ENCODE measurements at regions of chr15 and their contacts with region 1.

Region 1: GRCh38 chr15:80031841-80032240 is 27.6 kb upstream of the ZFAND6 start:
- DNase-seq: no peak
- H3K4me3 ChIP-seq: no peak overlapping the region
- H3K27ac ChIP-seq: no peak overlapping the region
- H3K4me1 ChIP-seq: peaks cover 18% of the 10 kb centered on the region
- H3K27me3 ChIP-seq: no peaks in the 10 kb centered on the region
- CTCF ChIP-seq: no peak
- POLR2A ChIP-seq: no peak

Region 2: GRCh38 chr15:79923515-79924395 is 108.1 kb before region 1 on chr15:
- CTCF ChIA-PET with region 1: no interaction called
- POLR2A ChIA-PET with region 1: interaction called, 3 read pairs
- dilution Hi-C with region 1: no loop called
- intact Hi-C with region 1: loop called (anchors 1 kb)
- DNase-seq: peak; percentile 93
- H3K4me3 ChIP-seq: peak overlapping the region; percentile 87 to 96 (median 92)
- H3K27ac ChIP-seq: peak overlapping the region; percentile 52
- H3K4me1 ChIP-seq: peaks cover 10% of the 10 kb centered on the region
- H3K27me3 ChIP-seq: no peaks in the 10 kb centered on the region
- CTCF ChIP-seq: no peak
- POLR2A ChIP-seq: peak; percentile 85

Region 3: GRCh38 chr15:80058851-80059785 is 27.3 kb after region 1 on chr15 and contains the start of gene ZFAND6:
- CTCF ChIA-PET with region 1: interaction called, 3 read pairs
- POLR2A ChIA-PET with region 1: interaction called, 5 read pairs
- dilution Hi-C with region 1: no loop called
- intact Hi-C with region 1: loop called (anchors 1 kb)
- DNase-seq: peak; percentile 93
- H3K4me3 ChIP-seq: peak within 1 kb of the TSS; percentile 54 to 90 (median 89)
- H3K27ac ChIP-seq: peak within 1 kb of the TSS; percentile 87
- H3K4me1 ChIP-seq: peaks cover 18% of the 10 kb centered on the region
- H3K27me3 ChIP-seq: peaks cover 8 to 16% of the 10 kb centered on the region in 2 experiments
- CTCF ChIP-seq: no peak
- POLR2A ChIP-seq: peak; percentile 59
- total RNA-seq, gene ZFAND6: 50.3 and 53.0 TPM in 2 replicates

Region 4: DNA sequence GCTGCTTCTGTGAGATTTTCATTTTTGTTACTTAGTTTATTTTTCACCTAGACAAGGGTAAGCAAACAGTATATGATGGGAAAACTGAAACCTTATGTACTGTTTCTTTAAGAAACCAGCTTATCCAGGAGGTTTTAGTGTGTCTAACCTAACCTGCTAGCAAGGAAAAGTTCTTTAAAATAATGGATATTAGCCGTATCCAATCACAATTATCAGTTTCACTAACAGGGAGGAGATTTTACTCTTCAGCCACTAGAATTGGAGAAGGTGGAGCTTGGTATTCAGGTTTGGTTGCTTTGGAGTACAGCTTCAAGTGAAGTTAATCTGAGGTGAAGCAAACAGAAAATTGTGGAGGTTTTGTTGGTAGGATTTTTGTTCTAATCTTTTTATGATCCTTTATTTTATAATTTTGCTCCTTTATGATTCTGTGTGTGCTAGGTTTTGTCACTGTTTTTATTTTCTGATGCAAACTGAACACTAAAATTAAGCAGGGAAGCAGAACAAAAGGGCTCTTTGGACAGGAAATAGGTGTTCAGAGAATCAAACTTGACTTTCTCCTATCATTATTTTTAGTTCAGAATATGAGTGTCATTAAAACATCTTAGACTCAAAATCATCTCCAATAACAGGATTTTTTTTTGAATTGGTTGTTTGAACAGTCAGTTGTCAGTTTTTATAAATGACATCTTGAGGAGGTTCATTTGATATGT is 40.6 kb after region 1 on chr15:
- CTCF ChIA-PET with region 1: no interaction called
- POLR2A ChIA-PET with region 1: no interaction called
- dilution Hi-C with region 1: no loop called
- intact Hi-C with region 1: loop called (anchors 1 kb)
- DNase-seq: peak; percentile 95
- H3K4me3 ChIP-seq: peak overlapping the region; percentile 34 to 98 (median 92)
- H3K27ac ChIP-seq: peak overlapping the region; percentile 32
- H3K4me1 ChIP-seq: peaks cover 16% of the 10 kb centered on the region
- H3K27me3 ChIP-seq: no peaks in the 10 kb centered on the region
- CTCF ChIP-seq: no peak
- POLR2A ChIP-seq: no peak

Region 5: GRCh38 chr15:80093854-80094418 is 62.1 kb after region 1 on chr15:
- CTCF ChIA-PET with region 1: no interaction called
- POLR2A ChIA-PET with region 1: no interaction called
- dilution Hi-C with region 1: no loop called
- intact Hi-C with region 1: loop called (anchors 2 kb)
- DNase-seq: peak; percentile 75
- H3K4me3 ChIP-seq: no peak overlapping the region
- H3K27ac ChIP-seq: no peak overlapping the region
- H3K4me1 ChIP-seq: no peaks in the 10 kb centered on the region
- H3K27me3 ChIP-seq: no peaks in the 10 kb centered on the region
- CTCF ChIP-seq: no peak
- POLR2A ChIP-seq: no peak

Region 6: DNA sequence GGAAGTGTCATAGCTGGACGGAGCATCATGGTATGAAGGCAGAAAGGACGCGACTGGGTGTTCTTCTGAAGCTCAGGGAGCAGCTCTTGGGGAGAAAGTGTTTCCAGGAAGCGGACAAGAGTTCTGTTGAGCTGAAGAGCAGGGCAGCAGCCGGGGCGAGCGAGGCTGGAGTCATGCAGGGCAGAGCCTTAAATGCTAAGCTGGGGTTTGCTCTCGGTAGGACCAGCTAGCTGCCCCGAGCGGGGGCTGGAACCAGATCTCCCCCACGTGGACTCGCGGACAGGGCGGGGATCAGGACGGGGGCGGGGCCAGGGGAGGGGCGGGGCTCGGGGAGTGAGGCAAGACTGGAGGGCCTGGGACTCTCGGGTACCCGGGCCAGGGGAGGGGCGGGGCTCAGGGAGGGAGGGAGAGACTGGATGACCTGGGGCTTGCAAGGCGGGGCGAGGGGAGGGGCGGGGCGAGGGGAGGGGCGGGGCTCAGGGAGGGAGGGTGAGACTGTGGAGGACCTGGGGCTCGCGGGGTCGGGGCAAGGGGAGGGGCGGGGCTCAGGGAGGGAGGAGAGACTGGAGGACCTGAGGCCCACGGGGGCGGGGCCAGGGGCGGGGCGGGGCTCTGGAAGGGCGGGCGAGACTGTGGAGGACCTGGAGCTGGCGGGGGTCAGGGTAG is 120.5 kb after region 1 on chr15:
- CTCF ChIA-PET with region 1: no interaction called
- POLR2A ChIA-PET with region 1: no interaction called
- dilution Hi-C with region 1: no loop called
- intact Hi-C with region 1: loop called (anchors 2 kb)
- DNase-seq: peak; percentile 86
- H3K4me3 ChIP-seq: peak overlapping the region in 2 of 3 experiments; percentile 17 to 75
- H3K27ac ChIP-seq: no peak overlapping the region
- H3K4me1 ChIP-seq: peaks cover 9% of the 10 kb centered on the region
- H3K27me3 ChIP-seq: peaks cover 0 to 2% of the 10 kb centered on the region in 2 experiments
- CTCF ChIP-seq: no peak
- POLR2A ChIP-seq: no peak

Region 7: DNA sequence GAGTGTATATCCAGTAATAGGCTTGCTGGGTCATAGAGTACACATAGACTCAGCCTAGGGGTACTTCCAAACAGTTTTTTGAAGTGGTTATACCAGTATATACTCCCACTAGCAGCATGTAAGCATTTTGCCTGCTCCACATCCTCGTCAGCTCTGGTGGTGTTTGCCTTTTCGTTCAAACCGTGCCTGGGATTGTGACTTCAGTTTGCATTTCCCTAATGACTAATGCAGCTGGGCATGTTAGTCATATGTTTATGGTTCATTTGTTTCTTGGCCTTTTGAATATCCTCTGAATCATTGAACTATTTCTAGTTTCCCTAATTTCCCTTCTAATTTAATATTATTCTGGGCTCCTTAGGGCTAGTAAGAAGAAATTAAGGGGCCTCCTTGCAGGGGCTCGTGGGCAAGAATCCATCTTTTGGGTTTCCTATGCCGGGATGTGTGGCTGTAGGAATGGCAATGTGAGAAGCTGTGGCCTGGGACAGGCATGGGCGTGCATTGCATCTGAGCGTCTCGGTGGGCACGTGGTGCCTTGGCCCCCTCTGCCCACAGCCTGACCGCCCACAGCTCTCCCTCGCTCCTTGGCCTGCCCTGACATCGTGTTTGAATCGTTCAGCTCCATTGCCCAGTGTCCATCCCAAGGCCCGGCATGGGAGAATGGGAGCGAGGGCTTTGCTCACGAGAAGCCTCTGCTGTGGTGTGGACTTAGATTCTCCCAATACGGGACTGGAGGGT is 147.4 kb after region 1 on chr15:
- CTCF ChIA-PET with region 1: no interaction called
- POLR2A ChIA-PET with region 1: no interaction called
- dilution Hi-C with region 1: no loop called
- intact Hi-C with region 1: loop called (anchors 1 kb)
- DNase-seq: peak; percentile 91
- H3K4me3 ChIP-seq: no peak overlapping the region
- H3K27ac ChIP-seq: peak overlapping the region; percentile 41
- H3K4me1 ChIP-seq: peaks cover 31% of the 10 kb centered on the region
- H3K27me3 ChIP-seq: no peaks in the 10 kb centered on the region
- CTCF ChIP-seq: no peak
- POLR2A ChIP-seq: no peak

Measured in endothelial cell of umbilical vein (primary cell).